ENCODE measurements at regions of chr6 and their contacts with region 1.

Region 1: DNA sequence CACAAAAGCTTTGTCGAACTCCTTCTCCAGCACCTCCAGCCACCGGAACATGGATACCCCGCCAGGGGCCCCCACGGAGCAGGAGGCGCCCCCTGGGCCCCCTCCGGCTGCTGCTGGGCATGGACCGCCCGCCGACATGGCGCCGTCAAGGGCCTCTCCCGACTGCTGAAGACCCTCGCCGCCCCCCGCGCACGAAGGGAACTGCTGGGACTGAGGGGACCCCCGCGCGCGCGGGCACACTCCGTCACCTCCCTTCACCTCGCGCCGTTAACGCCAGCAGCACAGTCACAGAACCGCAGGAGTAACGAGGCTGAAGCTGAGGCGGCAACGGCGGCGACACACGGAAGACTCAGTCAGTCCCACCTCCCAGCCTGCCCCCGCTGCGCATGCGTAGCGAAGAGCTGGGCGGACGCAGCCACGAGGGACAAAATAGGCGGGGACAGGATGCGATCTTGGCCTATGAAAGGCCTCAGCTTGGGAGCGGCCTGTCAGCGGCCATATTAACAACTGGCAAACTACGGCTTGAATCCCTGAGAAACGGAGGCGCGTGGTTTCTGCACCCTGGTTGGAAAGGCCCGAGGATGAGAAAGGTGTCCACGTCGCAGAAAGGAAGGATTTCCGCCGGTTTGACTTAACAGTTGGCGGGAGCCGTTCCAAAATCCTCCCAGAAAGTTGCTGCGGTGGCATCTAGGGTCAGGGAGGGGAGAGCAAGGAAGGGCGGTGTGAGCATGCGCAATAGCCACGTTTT is at the start of gene GOPC:
- DNase-seq: peak; percentile 95 to 96
- ATAC-seq: peak; percentile 99 to 100 (median 100)
- H3K4me3 ChIP-seq: peak within 1 kb of the TSS; percentile 68 to 99 (median 92)
- H3K27ac ChIP-seq: peak within 1 kb of the TSS; percentile 81 to 94 (median 92)
- H3K4me1 ChIP-seq: peaks cover 0 to 39% (median 29%) of the 10 kb centered on the region in 9 donors
- H3K27me3 ChIP-seq: no peaks in the 10 kb centered on the region
- CTCF ChIP-seq: peak in 4 of 9 donors; percentile 9 to 42 (median 28)
- total RNA-seq, gene GOPC: 16.7 to 32.8 (median 24.3) TPM

Region 2: DNA sequence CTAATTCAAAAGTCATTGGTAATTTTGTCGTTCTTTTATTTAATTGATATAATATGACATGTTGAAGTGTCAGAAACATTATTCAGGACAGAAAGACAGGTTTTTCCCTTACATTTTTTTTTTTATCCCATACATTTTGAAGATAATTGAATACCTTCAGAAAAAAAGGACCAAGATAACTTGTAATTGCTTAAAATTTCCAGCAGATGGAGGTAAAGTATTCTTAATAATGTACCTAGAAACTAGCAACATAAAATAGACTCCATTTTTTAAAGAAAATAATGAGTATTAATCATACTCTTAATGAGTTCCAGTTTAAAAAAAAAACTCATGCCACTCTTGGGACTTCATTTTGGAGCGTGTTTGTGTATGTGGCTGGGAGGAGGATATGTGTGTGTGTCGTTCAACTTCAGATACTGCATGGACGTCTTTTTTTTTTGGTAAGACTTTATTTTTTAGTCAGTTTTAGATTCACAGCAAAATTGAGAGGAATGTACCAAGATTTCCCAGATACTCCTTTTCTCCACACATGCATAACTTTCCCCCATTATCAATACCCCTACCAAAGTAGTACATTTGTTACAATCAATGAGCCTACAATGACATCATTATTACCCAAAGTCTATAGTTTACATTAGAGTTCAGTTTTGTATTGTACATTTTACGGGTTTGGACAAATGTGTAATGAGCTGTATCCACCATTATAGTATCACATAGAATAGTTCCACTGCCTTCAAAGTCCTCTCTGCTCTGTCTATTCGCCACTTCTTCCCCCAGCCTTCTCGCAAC is 256.0 kb before region 1 on chr6:
- intact Hi-C with region 1: loop called in 9 of 10 experiments (anchors 1 to 10 kb)
- DNase-seq: no peak
- ATAC-seq: peak in 1 of 8 donors; percentile 11
- H3K4me3 ChIP-seq: peak overlapping the region in 2 of 10 donors; percentile 20 to 23
- H3K27ac ChIP-seq: no peak overlapping the region
- H3K4me1 ChIP-seq: no peaks in the 10 kb centered on the region
- H3K27me3 ChIP-seq: peaks cover 0 to 9% (median 0%) of the 10 kb centered on the region in 7 donors
- CTCF ChIP-seq: peak; percentile 26 to 73 (median 59)

Region 3: GRCh38 chr6:117425431-117426153 is 176.7 kb before region 1 on chr6 and contains the start of gene ROS1:
- intact Hi-C with region 1: no loop called
- DNase-seq: no peak
- ATAC-seq: no peak
- H3K4me3 ChIP-seq: no peak within 1 kb of the TSS
- H3K27ac ChIP-seq: no peak within 1 kb of the TSS
- H3K4me1 ChIP-seq: no peaks in the 10 kb centered on the region
- H3K27me3 ChIP-seq: peaks cover 0 to 9% (median 0%) of the 10 kb centered on the region in 7 donors
- CTCF ChIP-seq: no peak
- total RNA-seq, gene ROS1: 0.02 to 0.13 (median 0.08) TPM in 8 of 10 donors, not detected in the others

Region 4: GRCh38 chr6:117482240-117483003 is 119.9 kb before region 1 on chr6 and contains the start of gene DCBLD1:
- intact Hi-C with region 1: loop called in 3 of 10 experiments (anchors 2 to 10 kb)
- DNase-seq: peak; percentile 68 to 83
- ATAC-seq: peak; percentile 89 to 96 (median 93)
- H3K4me3 ChIP-seq: peak within 1 kb of the TSS; percentile 48 to 92 (median 82)
- H3K27ac ChIP-seq: peak within 1 kb of the TSS; percentile 70 to 94 (median 89)
- H3K4me1 ChIP-seq: peaks cover 5 to 29% (median 18%) of the 10 kb centered on the region in 9 donors
- H3K27me3 ChIP-seq: peaks cover 0 to 24% (median 0%) of the 10 kb centered on the region in 7 donors
- CTCF ChIP-seq: no peak
- total RNA-seq, gene DCBLD1: 2.7 to 7.2 (median 4.2) TPM

Region 5: GRCh38 chr6:117512056-117512828 is 90.1 kb before region 1 on chr6:
- intact Hi-C with region 1: no loop called
- DNase-seq: no peak
- ATAC-seq: no peak
- H3K4me3 ChIP-seq: no peak overlapping the region
- H3K27ac ChIP-seq: no peak overlapping the region
- H3K4me1 ChIP-seq: peaks cover 0 to 19% (median 0%) of the 10 kb centered on the region in 9 donors
- H3K27me3 ChIP-seq: no peaks in the 10 kb centered on the region
- CTCF ChIP-seq: no peak

Region 6: DNA sequence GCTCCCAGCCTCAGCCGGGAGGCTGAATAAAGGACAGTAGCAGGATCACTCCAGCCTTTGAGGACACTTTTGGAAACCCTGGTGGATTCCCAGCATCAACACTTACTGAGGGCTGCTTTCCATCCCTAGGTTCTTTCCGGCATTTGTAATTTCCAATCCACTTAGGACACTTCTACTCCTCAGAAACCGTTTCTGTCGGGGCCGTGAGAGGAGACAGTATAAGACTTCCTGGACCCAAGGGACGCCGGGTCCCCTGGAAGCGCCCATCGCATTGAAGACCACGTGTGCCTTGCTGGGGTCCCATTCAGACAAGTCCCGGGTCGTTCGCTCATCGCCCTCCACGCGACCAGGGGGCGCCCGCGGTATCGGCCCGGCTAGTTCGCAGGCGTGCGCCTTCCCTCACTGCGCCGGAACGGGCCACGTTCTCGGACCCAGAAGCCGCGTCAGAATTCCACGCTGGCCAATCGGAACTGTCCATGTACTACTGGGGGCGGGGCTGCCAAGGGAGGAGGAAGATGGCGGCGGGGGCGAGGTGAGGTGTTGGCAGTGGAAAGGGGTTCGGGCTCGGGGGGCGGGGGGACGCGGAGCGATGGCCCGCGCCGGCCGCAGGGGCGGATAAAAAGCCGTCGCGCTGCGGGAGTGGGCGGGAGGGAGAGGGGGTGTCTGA is 72.8 kb after region 1 on chr6 and contains the start of gene NUS1:
- intact Hi-C with region 1: loop called in 5 of 10 experiments (anchors 2 to 10 kb)
- DNase-seq: peak; percentile 97 to 98
- ATAC-seq: peak; percentile 100
- H3K4me3 ChIP-seq: peak within 1 kb of the TSS; percentile 55 to 91 (median 75)
- H3K27ac ChIP-seq: peak within 1 kb of the TSS in 9 of 10 donors; percentile 72 to 85 (median 78)
- H3K4me1 ChIP-seq: peaks cover 0 to 47% (median 39%) of the 10 kb centered on the region in 9 donors
- H3K27me3 ChIP-seq: no peaks in the 10 kb centered on the region
- CTCF ChIP-seq: peak; percentile 65 to 95 (median 72)
- total RNA-seq, gene NUS1: 10.4 to 18.9 (median 13.7) TPM

Region 7: GRCh38 chr6:118893807-118894424 is 1291.6 kb after region 1 on chr6 and contains the start of gene ASF1A:
- intact Hi-C with region 1: loop called in 1 of 10 experiments (anchors 5 kb)
- DNase-seq: peak; percentile 93 to 98
- ATAC-seq: peak; percentile 93 to 96 (median 95)
- H3K4me3 ChIP-seq: peak within 1 kb of the TSS; percentile 86 to 94 (median 89)
- H3K27ac ChIP-seq: peak within 1 kb of the TSS; percentile 91 to 96 (median 94)
- H3K4me1 ChIP-seq: peaks cover 0 to 60% (median 39%) of the 10 kb centered on the region in 9 donors
- H3K27me3 ChIP-seq: no peaks in the 10 kb centered on the region
- CTCF ChIP-seq: peak; percentile 46 to 79 (median 56)
- total RNA-seq, gene ASF1A: 15.1 to 25.5 (median 22.0) TPM